Activated naive CD4-positive, alpha-beta T cell treated with anti-CD3 and anti-CD28 coated beads for 36 hours (primary cell): ENCODE measurements at regions of chr15 and their contacts with region 1.

Region 1: DNA sequence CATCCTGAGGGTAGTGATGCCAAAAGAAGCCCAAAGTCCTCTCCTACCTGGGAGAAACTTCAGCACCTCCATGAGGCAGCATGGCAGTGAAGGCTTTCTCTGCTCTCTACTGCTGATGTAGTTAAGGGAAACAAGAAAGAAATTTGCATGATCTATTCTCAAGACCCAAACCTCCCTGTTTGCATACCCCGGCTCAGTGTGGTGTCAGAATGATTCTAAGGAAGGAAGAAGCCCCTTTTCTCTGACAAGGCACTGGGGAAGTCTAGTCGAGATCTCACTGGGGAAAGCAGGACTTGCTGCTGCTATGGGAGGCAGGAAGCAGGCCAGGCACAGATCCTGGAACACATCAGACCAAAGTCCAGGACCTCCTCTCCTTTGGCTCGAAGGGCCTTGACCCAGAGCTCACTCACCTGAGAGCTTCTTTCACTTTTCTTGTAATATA is 89.4 kb upstream of the ICE2 start:
- DNase-seq: no peak
- H3K4me3 Mint-ChIP-seq: peak overlapping the region; percentile 8
- H3K27ac Mint-ChIP-seq: peak overlapping the region; percentile 57
- H3K4me1 Mint-ChIP-seq: peaks cover 86% of the 10 kb centered on the region
- H3K27me3 Mint-ChIP-seq: no peaks in the 10 kb centered on the region

Region 2: DNA sequence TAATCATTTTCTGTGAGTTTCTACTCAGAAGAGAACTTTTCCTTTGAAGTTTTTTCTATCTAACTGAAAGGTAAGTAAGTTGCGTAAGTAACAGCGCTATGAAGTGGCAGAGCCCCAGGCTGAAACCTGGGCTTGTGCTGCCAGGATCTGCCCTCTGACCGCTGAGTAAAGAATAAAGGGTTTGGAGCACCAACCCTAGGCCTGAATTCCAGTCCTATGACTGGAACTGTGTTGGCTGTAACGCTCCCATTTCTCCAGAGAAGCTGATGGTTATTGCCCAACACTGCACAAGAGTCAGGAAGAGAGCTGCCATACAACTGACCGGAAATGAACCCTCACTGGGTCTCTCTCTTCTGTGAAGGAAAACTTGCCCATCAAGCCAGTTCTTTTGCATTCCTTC is 477.2 kb before region 1 on chr15:
- CTCF ChIA-PET with region 1: no interaction called
- intact Hi-C with region 1: no loop called
- DNase-seq: no peak
- H3K4me3 Mint-ChIP-seq: no peak overlapping the region
- H3K27ac Mint-ChIP-seq: no peak overlapping the region
- H3K4me1 Mint-ChIP-seq: no peaks in the 10 kb centered on the region
- H3K27me3 Mint-ChIP-seq: peaks cover 7% of the 10 kb centered on the region

Region 3: GRCh38 chr15:60326824-60327654 is 241.3 kb before region 1 on chr15:
- CTCF ChIA-PET with region 1: no interaction called
- intact Hi-C with region 1: no loop called
- DNase-seq: peak; percentile 54
- H3K4me3 Mint-ChIP-seq: no peak overlapping the region
- H3K27ac Mint-ChIP-seq: no peak overlapping the region
- H3K4me1 Mint-ChIP-seq: peaks cover 2% of the 10 kb centered on the region
- H3K27me3 Mint-ChIP-seq: peaks cover 20% of the 10 kb centered on the region

Region 4: GRCh38 chr15:60548101-60548500 is 20.2 kb before region 1 on chr15:
- CTCF ChIA-PET with region 1: interaction called, 13 read pairs
- intact Hi-C with region 1: loop called (anchors 1 kb)
- DNase-seq: peak; percentile 83
- H3K4me3 Mint-ChIP-seq: peak overlapping the region; percentile 39
- H3K27ac Mint-ChIP-seq: peak overlapping the region; percentile 80
- H3K4me1 Mint-ChIP-seq: peaks cover 92% of the 10 kb centered on the region
- H3K27me3 Mint-ChIP-seq: no peaks in the 10 kb centered on the region